Activated CD4-positive, alpha-beta T cell treated with anti-CD3 and anti-CD28 coated beads, Interleukin-2, amount 10 ng/mL, durations not matched to agents 24 days and 14 days (primary cell): ENCODE measurements at regions of chr6 and their contacts with region 1.

Region 1: GRCh38 chr6:167898673-167899311 is 72.1 kb downstream of the AFDN start:
- DNase-seq: no peak
- H3K4me3 Mint-ChIP-seq: no peak overlapping the region
- H3K27ac Mint-ChIP-seq: no peak overlapping the region
- H3K4me1 Mint-ChIP-seq: no peaks in the 10 kb centered on the region
- H3K27me3 Mint-ChIP-seq: no peaks in the 10 kb centered on the region

Region 2: DNA sequence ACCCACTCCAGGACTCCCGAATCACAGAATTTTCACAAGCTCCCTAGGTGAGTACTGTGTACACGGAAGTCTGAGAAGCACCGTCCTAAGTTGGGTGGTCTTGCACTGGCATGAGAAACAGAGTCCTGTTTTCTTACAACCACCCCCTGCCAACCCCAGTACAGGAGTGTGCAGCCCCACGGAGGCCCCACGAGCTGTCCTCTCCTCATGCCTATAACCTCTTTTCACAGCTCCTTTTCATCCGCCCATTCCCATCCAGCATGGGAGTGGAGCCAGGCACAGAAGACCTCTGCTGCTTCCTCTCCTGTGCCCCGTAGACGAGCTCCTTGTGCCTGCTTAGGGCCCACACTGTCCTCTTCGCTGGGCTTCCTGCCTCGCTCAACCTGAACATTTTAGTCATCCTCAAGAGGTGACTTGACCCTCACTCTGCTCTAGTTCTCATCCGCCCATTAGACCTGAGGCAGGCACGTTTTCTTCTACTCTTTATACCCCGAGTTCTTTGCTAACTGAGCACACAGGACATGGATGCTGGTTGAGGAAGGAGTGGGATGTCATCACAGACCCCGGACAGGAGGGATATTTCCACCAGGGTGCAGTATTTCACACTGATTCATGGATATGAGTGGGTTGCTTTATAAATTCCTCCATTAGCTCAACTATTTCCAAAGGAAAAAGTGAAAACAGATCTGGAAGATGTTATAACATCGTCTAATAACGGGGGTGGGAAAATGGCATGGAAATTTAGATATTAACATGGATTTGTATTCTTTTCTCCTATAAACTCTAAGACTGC is 413.4 kb before region 1 on chr6:
- intact Hi-C with region 1: loop called (anchors 2 kb)
- DNase-seq: no peak
- H3K4me3 Mint-ChIP-seq: no peak overlapping the region
- H3K27ac Mint-ChIP-seq: no peak overlapping the region
- H3K4me1 Mint-ChIP-seq: no peaks in the 10 kb centered on the region
- H3K27me3 Mint-ChIP-seq: peaks cover 8% of the 10 kb centered on the region

Region 3: DNA sequence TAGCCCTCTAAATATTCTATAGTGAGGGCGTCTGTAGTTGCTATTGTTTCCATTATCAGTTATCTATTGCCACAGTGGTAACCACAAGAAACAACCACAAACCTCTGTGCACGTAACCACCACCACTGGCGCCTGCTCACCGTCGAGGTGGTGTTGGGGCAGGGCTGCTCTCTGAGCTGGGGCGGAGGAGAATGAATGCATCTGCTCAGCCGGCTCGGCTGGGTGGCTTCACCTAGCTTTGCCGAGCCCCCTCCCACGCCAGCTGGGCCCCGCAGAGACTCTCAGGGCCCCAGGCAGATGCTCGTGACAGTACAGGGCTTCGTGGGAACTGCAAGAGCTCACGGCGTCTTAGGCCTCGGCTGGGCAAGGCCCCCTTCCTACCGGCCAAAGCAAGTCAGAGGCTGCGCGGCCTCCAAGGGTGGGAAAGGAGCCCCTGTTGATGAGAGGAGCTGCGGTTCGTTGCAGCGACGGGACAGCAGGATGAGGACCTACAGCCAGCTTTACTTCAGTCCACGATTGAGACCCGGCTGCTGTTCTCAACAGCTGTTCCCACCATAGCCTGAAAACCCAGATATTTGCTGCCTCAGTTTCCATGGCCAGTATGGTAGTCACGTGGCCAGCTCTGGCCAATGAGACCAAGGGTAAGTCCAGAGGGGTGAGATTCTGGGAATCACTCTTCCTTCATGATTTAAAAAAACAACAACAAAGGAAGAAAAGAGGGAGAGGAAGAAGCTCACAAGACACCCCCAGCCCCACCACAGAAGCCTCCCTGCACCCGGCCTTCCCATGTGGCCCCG is 192.3 kb before region 1 on chr6:
- intact Hi-C with region 1: loop called (anchors 10 kb)
- DNase-seq: peak; percentile 94
- H3K4me3 Mint-ChIP-seq: peak overlapping the region; percentile 69
- H3K27ac Mint-ChIP-seq: peak overlapping the region; percentile 96
- H3K4me1 Mint-ChIP-seq: peaks cover 38% of the 10 kb centered on the region
- H3K27me3 Mint-ChIP-seq: peaks cover 63% of the 10 kb centered on the region

Region 4: DNA sequence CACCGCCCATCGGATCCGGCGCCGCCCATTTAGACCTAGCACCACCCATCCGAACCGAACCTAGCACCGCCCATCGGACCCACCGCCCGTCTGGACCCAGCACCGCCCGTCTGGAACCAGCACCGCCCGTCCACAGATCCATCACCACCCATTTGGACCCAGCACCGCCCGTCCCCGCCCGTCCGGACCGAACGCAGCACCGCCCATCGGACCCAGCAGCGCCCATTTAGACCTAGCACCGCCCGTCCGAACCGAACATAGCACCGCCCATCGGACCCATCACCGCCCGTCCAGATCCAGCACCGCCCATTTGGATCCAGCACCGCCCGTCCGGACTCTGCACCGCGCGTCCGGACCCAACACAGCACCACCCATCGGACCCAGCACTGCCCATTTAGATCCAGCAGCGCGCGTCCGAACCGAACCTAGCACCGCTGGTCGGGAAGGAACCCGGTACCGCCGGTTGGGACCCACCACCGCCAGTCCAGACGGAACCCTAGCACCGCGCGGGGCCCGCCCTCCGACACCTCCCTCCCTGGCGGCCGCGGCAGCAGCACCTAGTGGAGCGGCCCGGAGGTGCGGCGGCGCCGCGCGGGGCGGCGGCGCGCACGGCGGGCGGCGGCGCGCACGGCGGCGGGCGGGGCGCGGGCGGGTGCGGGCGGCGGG is 72.4 kb before region 1 on chr6:
- intact Hi-C with region 1: loop called (anchors 5 kb)
- DNase-seq: peak; percentile 91
- H3K4me3 Mint-ChIP-seq: peak overlapping the region; percentile 89
- H3K27ac Mint-ChIP-seq: peak overlapping the region; percentile 76
- H3K4me1 Mint-ChIP-seq: peaks cover 31% of the 10 kb centered on the region
- H3K27me3 Mint-ChIP-seq: peaks cover 70% of the 10 kb centered on the region

Region 5: GRCh38 chr6:168414336-168415097 is 515.7 kb after region 1 on chr6:
- intact Hi-C with region 1: no loop called
- DNase-seq: no peak
- H3K4me3 Mint-ChIP-seq: no peak overlapping the region
- H3K27ac Mint-ChIP-seq: no peak overlapping the region
- H3K4me1 Mint-ChIP-seq: no peaks in the 10 kb centered on the region
- H3K27me3 Mint-ChIP-seq: peaks cover 4% of the 10 kb centered on the region